Upper lobe of right lung (tissue), 1 donor: ENCODE measurements at regions of chr18 and their contacts with region 1.

Region 1: GRCh38 chr18:63578357-63578958 is 8.7 kb upstream of the SERPINB13 start:
- DNase-seq: no peak
- ATAC-seq: peak; percentile 81
- H3K4me3 ChIP-seq: no peak overlapping the region
- H3K27ac ChIP-seq: no peak overlapping the region
- H3K4me1 ChIP-seq: no peaks in the 10 kb centered on the region
- H3K27me3 ChIP-seq: no peaks in the 10 kb centered on the region
- CTCF ChIP-seq: peak; percentile 70

Region 2: GRCh38 chr18:63518178-63519012 is 60.1 kb before region 1 on chr18:
- intact Hi-C with region 1: loop called (anchors 10 kb)
- DNase-seq: no peak
- ATAC-seq: peak; percentile 96
- H3K4me3 ChIP-seq: no peak overlapping the region
- H3K27ac ChIP-seq: no peak overlapping the region
- H3K4me1 ChIP-seq: no peaks in the 10 kb centered on the region
- H3K27me3 ChIP-seq: no peaks in the 10 kb centered on the region
- CTCF ChIP-seq: peak; percentile 76

Region 3: DNA sequence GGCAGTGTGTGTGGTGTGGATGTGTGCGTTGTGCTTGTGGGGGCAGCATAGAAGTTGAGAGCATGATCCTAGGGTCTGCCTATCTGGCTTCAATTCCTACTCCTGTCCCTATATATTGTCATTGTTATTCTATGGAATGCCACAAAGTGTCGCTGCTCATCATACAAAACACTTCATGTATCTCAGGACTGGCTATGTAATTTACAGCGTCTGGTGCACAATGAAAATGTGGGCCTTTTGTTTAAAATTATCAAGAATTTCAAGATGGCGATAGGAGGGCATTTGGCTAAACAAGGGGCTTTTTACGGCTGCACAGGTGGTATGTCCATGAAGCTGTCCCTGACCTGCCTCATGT is 312.5 kb after region 1 on chr18:
- intact Hi-C with region 1: no loop called
- DNase-seq: no peak
- ATAC-seq: peak; percentile 41
- H3K4me3 ChIP-seq: no peak overlapping the region
- H3K27ac ChIP-seq: no peak overlapping the region
- H3K4me1 ChIP-seq: no peaks in the 10 kb centered on the region
- H3K27me3 ChIP-seq: peaks cover 5% of the 10 kb centered on the region
- CTCF ChIP-seq: no peak